Activated naive CD4-positive, alpha-beta T cell treated with anti-CD3 and anti-CD28 coated beads for 36 hours (primary cell): ENCODE measurements at regions of chr2 and their contacts with region 1.

Region 1: GRCh38 chr2:190376591-190377245 is 31.4 kb upstream of the MFSD6 start:
- DNase-seq: no peak
- H3K4me3 Mint-ChIP-seq: no peak overlapping the region
- H3K27ac Mint-ChIP-seq: no peak overlapping the region
- H3K4me1 Mint-ChIP-seq: no peaks in the 10 kb centered on the region
- H3K27me3 Mint-ChIP-seq: no peaks in the 10 kb centered on the region

Region 2: DNA sequence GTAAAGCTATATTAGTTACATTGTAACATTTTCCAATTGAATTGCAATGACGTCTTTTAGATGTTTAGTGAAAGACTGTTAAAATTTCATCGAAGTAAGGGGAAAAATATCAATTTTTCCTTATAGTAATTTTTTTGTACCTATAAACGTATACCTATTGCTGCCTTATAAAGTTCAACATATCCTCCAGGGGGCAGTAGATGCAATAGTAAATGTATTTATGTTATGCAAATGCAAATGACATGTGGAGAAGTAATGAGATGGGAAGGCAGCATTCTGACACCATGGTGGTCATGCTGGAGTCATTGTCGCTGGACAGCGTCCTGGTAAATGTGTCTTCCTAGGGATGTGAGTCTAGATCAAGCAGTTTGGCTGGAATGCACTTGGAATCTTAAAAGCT is 352.9 kb before region 1 on chr2:
- CTCF ChIA-PET with region 1: no interaction called
- intact Hi-C with region 1: loop called (anchors 1 kb)
- DNase-seq: no peak
- H3K4me3 Mint-ChIP-seq: no peak overlapping the region
- H3K27ac Mint-ChIP-seq: no peak overlapping the region
- H3K4me1 Mint-ChIP-seq: no peaks in the 10 kb centered on the region
- H3K27me3 Mint-ChIP-seq: peaks cover 15% of the 10 kb centered on the region

Region 3: GRCh38 chr2:190328573-190329147 is 48.1 kb before region 1 on chr2:
- CTCF ChIA-PET with region 1: no interaction called
- intact Hi-C with region 1: loop called (anchors 2 kb)
- DNase-seq: no peak
- H3K4me3 Mint-ChIP-seq: no peak overlapping the region
- H3K27ac Mint-ChIP-seq: no peak overlapping the region
- H3K4me1 Mint-ChIP-seq: no peaks in the 10 kb centered on the region
- H3K27me3 Mint-ChIP-seq: peaks cover 8% of the 10 kb centered on the region

Region 4: GRCh38 chr2:190350371-190350770 is 26.3 kb before region 1 on chr2:
- CTCF ChIA-PET with region 1: no interaction called
- intact Hi-C with region 1: no loop called
- DNase-seq: no peak
- H3K4me3 Mint-ChIP-seq: no peak overlapping the region
- H3K27ac Mint-ChIP-seq: no peak overlapping the region
- H3K4me1 Mint-ChIP-seq: no peaks in the 10 kb centered on the region
- H3K27me3 Mint-ChIP-seq: no peaks in the 10 kb centered on the region

Region 5: GRCh38 chr2:190701586-190701985 is 324.9 kb after region 1 on chr2:
- CTCF ChIA-PET with region 1: no interaction called
- intact Hi-C with region 1: no loop called
- DNase-seq: no peak
- H3K4me3 Mint-ChIP-seq: no peak overlapping the region
- H3K27ac Mint-ChIP-seq: no peak overlapping the region
- H3K4me1 Mint-ChIP-seq: peaks cover 3% of the 10 kb centered on the region
- H3K27me3 Mint-ChIP-seq: no peaks in the 10 kb centered on the region